ENCODE measurements at regions of chr22 and their contacts with region 1.

Region 1: DNA sequence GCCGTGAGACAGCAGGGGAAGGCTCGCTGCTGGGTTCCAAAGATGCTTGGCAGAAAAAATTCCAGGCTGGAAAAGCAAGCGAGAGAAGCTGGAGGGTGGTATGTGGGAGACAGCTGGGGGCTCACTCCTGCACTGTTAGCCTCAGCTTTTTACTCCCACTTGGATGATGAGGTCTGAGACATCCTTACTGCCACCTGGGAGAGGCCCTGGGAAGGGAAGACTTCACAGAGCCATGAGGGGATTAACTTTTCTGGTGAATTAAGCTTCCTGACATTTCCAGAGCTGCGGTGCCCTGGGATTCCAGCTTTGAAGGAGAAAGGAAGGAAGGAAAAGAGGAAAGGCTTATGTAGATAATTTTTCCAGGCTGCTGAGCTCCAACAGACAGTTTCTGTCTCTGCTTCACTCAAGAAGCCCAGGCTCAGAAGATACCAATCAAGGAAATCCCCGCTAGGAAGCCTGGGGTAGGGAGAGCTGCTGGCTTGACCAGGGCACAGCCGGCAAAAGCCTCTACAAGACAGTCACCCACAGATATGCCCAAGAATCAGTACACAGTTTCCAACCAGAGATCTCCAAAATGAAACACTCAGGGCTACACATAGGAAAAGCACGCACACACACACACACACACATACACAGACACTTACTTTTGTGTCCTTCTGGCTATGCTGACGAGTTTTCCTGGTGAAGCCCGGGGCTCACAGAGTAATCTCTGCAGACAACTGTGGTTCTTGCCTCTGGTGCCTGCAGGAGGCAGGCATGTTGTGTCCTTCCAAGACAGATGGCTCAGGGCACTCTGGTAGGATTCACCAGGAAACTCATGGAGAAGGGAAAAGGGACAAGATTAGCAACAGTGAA is 907 bp downstream of the MCHR1 start:
- DNase-seq: no peak
- H3K4me3 ChIP-seq: peak overlapping the region in 1 of 4 donors; percentile 35
- H3K27ac ChIP-seq: no peak overlapping the region
- H3K4me1 ChIP-seq: peaks cover 17 to 27% (median 27%) of the 10 kb centered on the region in 4 donors
- H3K27me3 ChIP-seq: peaks cover 0 to 22% (median 4%) of the 10 kb centered on the region in 4 donors
- CTCF ChIP-seq: no peak
- EP300 ChIP-seq: no peak
- POLR2A ChIP-seq: no peak

Region 2: GRCh38 chr22:40764763-40765441 is 84.7 kb after region 1 on chr22:
- intact Hi-C with region 1: loop called (anchors 5 kb)
- DNase-seq: no peak
- H3K4me3 ChIP-seq: no peak overlapping the region
- H3K27ac ChIP-seq: no peak overlapping the region
- H3K4me1 ChIP-seq: peaks cover 0 to 6% (median 2%) of the 10 kb centered on the region in 4 donors
- H3K27me3 ChIP-seq: no peaks in the 10 kb centered on the region
- CTCF ChIP-seq: no peak
- EP300 ChIP-seq: no peak
- POLR2A ChIP-seq: no peak

Region 3: DNA sequence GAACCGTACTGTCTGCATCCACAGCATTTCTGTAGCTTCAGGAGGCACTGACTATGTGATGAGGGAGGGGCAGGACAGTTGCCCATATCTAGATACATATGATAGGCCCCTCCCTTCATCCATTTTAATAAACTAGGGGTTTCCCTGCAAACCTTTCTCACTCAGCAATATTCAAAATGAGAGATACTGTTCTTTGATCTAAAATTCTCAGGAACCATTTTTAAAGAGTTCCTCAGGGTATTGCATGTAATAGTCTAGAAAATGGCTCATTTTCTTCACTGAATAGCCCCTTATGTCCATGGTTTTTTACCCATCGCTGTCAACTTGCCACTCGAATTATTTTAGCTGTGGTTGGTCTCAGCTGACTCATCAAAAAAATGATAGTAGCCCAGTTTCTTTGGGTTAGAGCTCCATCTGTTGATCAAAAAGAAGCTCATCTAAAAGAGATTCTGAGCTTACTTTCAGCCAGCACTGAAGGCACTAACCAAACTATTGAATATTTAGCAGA is 218.7 kb after region 1 on chr22:
- intact Hi-C with region 1: loop called (anchors 10 kb)
- DNase-seq: no peak
- H3K4me3 ChIP-seq: no peak overlapping the region
- H3K27ac ChIP-seq: no peak overlapping the region
- H3K4me1 ChIP-seq: peaks cover 0 to 6% (median 0%) of the 10 kb centered on the region in 4 donors
- H3K27me3 ChIP-seq: no peaks in the 10 kb centered on the region
- CTCF ChIP-seq: peak in 2 of 3 experiments; percentile 43 to 44
- EP300 ChIP-seq: no peak
- POLR2A ChIP-seq: no peak